OCI-LY7 (cell line): ENCODE measurements at regions of chr2 and their contacts with region 1.

Region 1: DNA sequence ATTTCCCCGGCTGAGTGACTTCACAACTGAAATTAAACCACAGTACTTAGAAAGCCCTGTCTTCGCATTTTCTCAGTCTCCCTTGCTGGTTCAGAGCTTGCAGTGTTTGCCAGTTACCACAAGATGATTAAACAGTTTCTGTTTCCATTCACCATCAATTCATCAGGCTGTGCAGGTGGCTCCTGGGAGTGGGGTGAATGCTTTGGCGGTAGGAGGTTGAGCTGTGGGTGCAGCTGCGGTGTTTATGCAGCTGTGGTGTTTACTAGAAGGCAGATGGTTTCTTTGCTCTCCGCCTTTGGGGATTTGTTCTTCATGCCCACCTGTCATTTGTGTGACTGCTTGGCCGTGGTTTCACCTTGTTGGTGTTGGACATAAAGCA is 16.1 kb downstream of the ACOXL start:
- DNase-seq: peak; percentile 95
- H3K4me3 ChIP-seq: no peak overlapping the region
- H3K27ac ChIP-seq: no peak overlapping the region
- H3K4me1 ChIP-seq: peaks cover 22% of the 10 kb centered on the region
- CTCF ChIP-seq: no peak

Region 2: GRCh38 chr2:109472974-109473373 is 1275.5 kb before region 1 on chr2:
- CTCF ChIA-PET with region 1: no interaction called
- POLR2A ChIA-PET with region 1: no interaction called
- intact Hi-C with region 1: loop called (anchors 5 kb)
- DNase-seq: no peak
- H3K4me3 ChIP-seq: no peak overlapping the region
- H3K27ac ChIP-seq: no peak overlapping the region
- H3K4me1 ChIP-seq: no peaks in the 10 kb centered on the region
- CTCF ChIP-seq: no peak

Region 3: DNA sequence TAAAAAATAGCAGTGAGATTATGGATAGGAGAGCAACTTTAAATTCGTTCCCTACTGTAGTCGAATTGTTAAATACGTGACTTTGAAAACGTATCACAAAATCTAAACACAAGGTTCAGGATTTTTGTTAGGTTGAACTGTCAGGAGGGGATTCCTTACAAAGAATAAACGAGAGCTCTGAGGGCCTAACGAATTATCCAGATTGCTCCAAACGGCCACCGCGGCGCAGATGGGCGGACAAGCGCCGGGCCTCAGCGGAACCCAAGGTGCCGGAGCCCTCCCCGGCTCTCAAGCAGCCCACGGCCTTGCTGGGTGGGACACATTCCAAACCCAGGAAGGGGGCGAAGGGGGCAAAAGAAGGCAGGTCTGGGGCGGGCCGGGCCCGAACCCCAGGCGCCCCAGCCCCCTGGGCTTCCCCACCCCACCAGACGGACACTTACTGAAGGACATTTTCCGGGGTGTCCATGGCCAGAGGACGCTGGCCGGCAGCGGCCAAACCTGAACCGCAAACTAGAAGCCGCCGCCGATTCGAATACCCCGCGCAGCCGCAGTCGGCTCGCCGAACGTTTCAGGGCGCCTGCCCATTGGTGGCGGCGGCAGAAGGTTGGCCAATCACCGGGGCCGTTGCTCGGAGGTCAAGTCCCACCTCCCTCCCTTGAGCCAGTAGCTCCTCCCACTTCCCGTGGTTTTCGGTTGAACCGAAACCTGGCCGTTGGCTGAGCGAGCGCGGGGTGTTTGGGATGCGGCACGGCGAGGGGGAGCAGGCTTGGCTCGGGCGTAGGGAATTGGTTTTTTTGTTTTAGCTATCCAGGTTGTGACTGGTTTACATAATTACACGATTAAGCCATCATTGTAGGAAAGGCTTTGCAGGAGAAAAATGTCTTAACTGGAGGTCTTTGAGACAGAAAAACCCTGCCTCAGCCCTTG is 70.7 kb before region 1 on chr2 and contains the start of gene BUB1:
- CTCF ChIA-PET with region 1: no interaction called
- POLR2A ChIA-PET with region 1: interaction called, 3 read pairs
- intact Hi-C with region 1: loop called (anchors 1 kb)
- DNase-seq: peak; percentile 96
- H3K4me3 ChIP-seq: peak within 1 kb of the TSS; percentile 92
- H3K27ac ChIP-seq: peak within 1 kb of the TSS; percentile 91
- H3K4me1 ChIP-seq: peaks cover 34% of the 10 kb centered on the region
- CTCF ChIP-seq: no peak
- total RNA-seq, gene BUB1: 107 and 125 TPM in 2 replicates

Region 4: GRCh38 chr2:110853507-110853906 is 105.0 kb after region 1 on chr2:
- CTCF ChIA-PET with region 1: no interaction called
- POLR2A ChIA-PET with region 1: no interaction called
- intact Hi-C with region 1: loop called (anchors 1 kb)
- DNase-seq: peak; percentile 67
- H3K4me3 ChIP-seq: no peak overlapping the region
- H3K27ac ChIP-seq: no peak overlapping the region
- H3K4me1 ChIP-seq: peaks cover 23% of the 10 kb centered on the region
- CTCF ChIP-seq: peak; percentile 91

Region 5: GRCh38 chr2:110925479-110925878 is 177.0 kb after region 1 on chr2:
- CTCF ChIA-PET with region 1: no interaction called
- POLR2A ChIA-PET with region 1: no interaction called
- intact Hi-C with region 1: no loop called
- DNase-seq: no peak
- H3K4me3 ChIP-seq: no peak overlapping the region
- H3K27ac ChIP-seq: no peak overlapping the region
- H3K4me1 ChIP-seq: no peaks in the 10 kb centered on the region
- CTCF ChIP-seq: no peak

Region 6: DNA sequence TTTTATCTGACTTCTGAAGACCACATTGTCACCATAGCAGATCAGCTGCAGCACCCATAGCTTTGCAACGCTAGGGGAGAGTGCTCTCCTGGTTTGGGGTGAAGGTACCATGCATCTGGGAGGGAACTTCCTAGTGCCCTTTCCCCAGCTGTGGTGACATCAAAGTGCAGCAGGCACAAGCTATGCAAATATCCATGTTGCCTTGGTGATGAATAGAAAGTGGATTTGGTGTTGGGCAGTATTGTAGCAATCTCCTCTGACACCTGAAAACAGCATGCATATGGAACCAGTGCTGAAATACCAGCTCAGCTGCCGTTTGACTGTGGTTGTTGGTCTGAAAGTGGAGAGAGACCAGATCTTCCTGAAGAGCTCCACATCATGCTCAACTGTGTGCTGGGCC is 409.3 kb after region 1 on chr2:
- CTCF ChIA-PET with region 1: no interaction called
- POLR2A ChIA-PET with region 1: no interaction called
- intact Hi-C with region 1: loop called (anchors 1 kb)
- DNase-seq: peak; percentile 80
- H3K4me3 ChIP-seq: peak overlapping the region; percentile 45
- H3K27ac ChIP-seq: peak overlapping the region; percentile 89
- H3K4me1 ChIP-seq: peaks cover 50% of the 10 kb centered on the region
- CTCF ChIP-seq: 0 out of 2 replicates have a peak, but pooled peaks have one; percentile 28

Region 7: DNA sequence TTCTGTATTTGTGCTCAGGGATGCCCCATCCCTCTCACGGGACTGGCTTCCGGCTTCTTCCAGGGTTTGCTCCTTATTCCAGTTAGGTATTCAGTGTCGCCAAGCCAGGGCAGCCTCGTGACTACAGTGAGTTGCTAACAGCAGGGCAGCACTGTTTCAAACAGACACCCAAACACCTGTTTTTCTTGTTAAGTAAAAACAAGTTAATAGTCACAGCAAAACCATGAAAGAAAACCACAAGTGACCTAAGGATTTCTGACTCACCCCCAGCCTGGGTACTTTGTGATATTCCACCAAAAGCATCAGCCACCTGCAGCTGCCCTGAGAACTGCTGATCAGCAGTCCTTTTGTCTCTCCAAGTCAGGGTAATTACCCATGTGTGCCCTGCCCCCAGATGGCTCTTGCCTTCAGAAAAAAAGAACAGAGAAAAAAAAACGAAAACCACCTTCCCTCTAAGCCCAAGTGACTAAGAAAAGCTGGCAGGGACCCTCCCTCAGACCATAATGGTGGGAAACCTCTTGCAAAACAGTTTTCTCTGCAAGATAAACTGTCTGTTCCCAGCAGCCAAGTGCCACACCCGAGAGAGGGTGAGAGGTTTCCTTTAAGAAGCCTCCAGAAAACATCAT is 957.3 kb after region 1 on chr2:
- CTCF ChIA-PET with region 1: no interaction called
- POLR2A ChIA-PET with region 1: no interaction called
- intact Hi-C with region 1: loop called (anchors 5 kb)
- DNase-seq: peak; percentile 98
- H3K4me3 ChIP-seq: peak overlapping the region; percentile 43
- H3K27ac ChIP-seq: peak overlapping the region; percentile 94
- H3K4me1 ChIP-seq: peaks cover 100% of the 10 kb centered on the region
- CTCF ChIP-seq: no peak